ENCODE measurements at regions of chr12 and their contacts with region 1.

Region 1: DNA sequence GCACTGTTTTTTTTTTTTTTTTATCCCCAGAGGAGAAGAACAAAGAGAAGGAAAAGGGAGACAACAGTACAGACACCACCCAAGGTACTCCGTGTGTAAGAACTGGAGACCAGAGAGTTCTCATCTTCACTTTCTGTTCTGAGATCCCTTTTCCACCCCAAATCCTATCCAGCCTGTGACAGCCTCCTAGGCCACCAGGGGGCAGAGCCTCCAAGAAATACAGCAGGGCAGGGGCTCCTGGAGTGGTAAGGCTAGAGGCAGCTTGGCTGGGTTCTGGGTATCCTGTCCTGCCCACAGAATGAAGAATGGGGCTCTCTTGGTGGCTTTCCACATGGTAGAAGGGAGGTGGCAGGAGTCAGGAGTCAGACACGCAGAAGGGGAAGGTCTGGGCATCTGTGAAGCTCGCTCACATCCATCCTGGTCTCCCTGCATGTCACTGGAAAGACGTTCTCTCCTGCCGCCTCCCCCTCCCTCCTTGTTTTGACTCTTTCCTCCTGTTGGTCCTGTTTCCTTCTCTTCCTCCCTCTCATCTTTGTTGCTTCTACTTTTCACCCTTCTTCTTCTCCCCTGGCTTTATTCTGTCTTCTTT is 12.0 kb downstream of the CLSTN3 start:
- DNase-seq: peak; percentile 20 to 68 (median 57)
- ATAC-seq: peak; percentile 90
- H3K4me3 ChIP-seq: no peak overlapping the region
- H3K4me3 Mint-ChIP-seq: no peak overlapping the region
- H3K27ac ChIP-seq: no peak overlapping the region
- H3K27ac Mint-ChIP-seq: no peak overlapping the region
- H3K4me1 ChIP-seq: no peaks in the 10 kb centered on the region
- H3K4me1 Mint-ChIP-seq: no peaks in the 10 kb centered on the region
- H3K27me3 ChIP-seq: no peaks in the 10 kb centered on the region
- H3K27me3 Mint-ChIP-seq: no peaks in the 10 kb centered on the region
- CTCF ChIP-seq: no peak

Region 2: DNA sequence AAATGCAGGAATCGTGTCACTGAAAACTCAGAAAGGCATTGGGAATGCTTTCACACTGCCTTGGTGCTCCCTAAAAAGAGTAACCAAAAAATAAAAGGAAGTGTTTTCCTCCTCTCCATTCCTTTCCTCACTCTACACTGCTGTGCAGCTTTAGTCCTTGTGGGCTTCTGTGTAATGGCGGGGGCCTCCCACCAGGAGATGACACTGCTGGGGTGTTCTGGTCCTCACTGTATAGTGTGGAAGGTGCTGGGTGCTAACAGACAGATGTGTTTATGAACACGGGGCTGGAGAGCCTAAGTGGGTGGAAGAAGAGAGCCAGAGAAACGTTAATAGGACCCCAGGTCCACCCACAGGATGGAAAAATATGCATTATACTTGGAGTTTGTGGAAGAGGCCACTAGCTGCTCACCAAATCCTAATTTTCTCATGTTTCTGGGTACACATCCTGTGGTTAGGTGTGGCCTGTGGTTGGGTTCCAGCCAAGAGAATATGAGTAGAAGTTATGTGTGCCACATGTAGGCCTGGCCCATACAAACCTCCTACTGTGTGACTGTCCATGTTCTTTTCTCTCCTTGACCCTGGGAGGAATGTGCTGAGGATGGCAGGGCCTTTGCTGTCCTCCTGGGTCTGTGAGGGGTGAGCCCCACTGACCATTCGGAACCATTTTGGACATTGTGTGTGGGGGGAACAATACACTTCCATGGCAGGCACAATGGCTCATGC is 95.6 kb before region 1 on chr12:
- CTCF ChIA-PET with region 1: no interaction called
- POLR2A ChIA-PET with region 1: no interaction called
- intact Hi-C with region 1: no loop called
- DNase-seq: no peak
- ATAC-seq: no peak
- H3K4me3 ChIP-seq: no peak overlapping the region
- H3K4me3 Mint-ChIP-seq: no peak overlapping the region
- H3K27ac ChIP-seq: no peak overlapping the region
- H3K27ac Mint-ChIP-seq: no peak overlapping the region
- H3K4me1 ChIP-seq: no peaks in the 10 kb centered on the region
- H3K4me1 Mint-ChIP-seq: peaks cover 8% of the 10 kb centered on the region
- H3K27me3 ChIP-seq: no peaks in the 10 kb centered on the region
- H3K27me3 Mint-ChIP-seq: no peaks in the 10 kb centered on the region
- CTCF ChIP-seq: no peak

Region 3: DNA sequence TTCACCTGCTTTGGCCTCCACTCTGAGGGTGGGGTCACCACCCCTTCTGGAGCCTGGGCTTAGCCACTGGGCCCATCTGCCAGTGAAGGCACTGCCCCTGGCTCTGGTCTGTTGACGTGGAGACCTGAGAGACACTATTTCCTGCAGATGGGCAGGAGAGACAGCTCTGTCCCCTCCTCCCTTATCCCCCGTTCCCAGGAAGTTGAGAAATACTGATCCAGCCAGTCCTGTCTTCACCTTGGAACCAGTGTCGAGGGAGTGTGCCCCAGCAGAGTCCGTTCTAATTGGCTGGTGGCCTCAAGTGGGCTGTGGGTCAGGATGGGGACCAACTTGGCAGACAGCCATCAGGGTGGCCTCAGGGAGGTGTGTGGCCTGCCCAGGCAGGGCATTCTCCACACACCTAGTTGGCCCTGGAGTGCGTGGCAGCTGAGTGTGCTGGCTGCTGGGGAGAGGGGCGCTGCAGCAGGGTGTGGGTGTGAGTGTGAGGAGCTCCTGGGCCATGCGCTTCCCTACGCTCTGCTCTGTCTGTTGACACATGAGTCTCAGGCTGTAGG is 13.4 kb after region 1 on chr12:
- CTCF ChIA-PET with region 1: interaction called, 38 read pairs
- POLR2A ChIA-PET with region 1: no interaction called
- intact Hi-C with region 1: no loop called
- DNase-seq: no peak
- ATAC-seq: no peak
- H3K4me3 ChIP-seq: no peak overlapping the region
- H3K4me3 Mint-ChIP-seq: no peak overlapping the region
- H3K27ac ChIP-seq: no peak overlapping the region
- H3K27ac Mint-ChIP-seq: no peak overlapping the region
- H3K4me1 ChIP-seq: no peaks in the 10 kb centered on the region
- H3K4me1 Mint-ChIP-seq: no peaks in the 10 kb centered on the region
- H3K27me3 ChIP-seq: no peaks in the 10 kb centered on the region
- H3K27me3 Mint-ChIP-seq: no peaks in the 10 kb centered on the region
- CTCF ChIP-seq: no peak

Region 4: DNA sequence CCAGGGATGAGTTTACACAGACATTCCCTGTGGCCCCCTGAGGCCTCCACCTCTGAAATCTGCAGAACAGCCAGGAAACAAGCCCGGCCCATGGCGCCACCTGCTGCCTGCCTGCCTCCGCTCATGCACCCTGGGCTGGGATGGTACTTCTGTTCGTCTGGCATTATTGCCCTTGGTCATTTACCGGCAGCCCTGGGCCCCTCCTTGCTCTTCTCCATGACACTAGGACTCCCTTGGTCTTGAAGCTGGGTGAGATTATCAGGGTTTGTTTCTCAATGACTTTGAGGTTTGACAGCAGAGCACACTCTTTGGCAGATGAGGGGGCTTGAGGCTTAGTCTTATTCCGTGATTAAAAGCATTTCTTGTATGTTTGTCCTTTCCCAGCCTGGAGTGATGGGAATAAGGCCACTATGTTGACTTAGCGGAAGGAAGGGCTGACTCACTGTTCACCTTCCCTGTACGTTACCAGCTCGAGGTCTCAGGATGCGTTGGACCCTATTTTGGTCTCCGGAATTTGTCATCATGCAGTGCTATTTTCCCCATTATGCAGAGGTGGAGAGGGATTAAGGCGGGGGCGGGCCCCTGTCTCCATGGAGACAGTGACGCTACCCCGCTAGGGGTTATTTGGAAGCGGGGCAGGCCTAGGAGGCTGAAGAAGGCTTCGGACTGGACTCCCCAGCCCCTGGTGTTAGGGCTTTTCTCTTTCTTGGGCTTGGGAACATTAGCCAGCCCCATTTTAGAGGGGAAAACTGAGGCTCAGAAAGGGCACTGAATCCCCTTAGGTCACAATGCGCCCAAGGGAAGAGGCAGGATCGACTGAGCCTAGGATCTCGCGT is 46.6 kb after region 1 on chr12:
- CTCF ChIA-PET with region 1: interaction called, 9 read pairs
- POLR2A ChIA-PET with region 1: no interaction called
- intact Hi-C with region 1: loop called (anchors 1 kb)
- DNase-seq: peak; percentile 36 to 76 (median 63)
- ATAC-seq: peak; percentile 32
- H3K4me3 ChIP-seq: peak overlapping the region; percentile 85 to 86
- H3K4me3 Mint-ChIP-seq: peak overlapping the region; percentile 95
- H3K27ac ChIP-seq: peak overlapping the region; percentile 66 to 90
- H3K27ac Mint-ChIP-seq: peak overlapping the region; percentile 97
- H3K4me1 ChIP-seq: peaks cover 26% of the 10 kb centered on the region
- H3K4me1 Mint-ChIP-seq: peaks cover 44% of the 10 kb centered on the region
- H3K27me3 ChIP-seq: no peaks in the 10 kb centered on the region
- H3K27me3 Mint-ChIP-seq: no peaks in the 10 kb centered on the region
- CTCF ChIP-seq: peak; percentile 63

Region 5: DNA sequence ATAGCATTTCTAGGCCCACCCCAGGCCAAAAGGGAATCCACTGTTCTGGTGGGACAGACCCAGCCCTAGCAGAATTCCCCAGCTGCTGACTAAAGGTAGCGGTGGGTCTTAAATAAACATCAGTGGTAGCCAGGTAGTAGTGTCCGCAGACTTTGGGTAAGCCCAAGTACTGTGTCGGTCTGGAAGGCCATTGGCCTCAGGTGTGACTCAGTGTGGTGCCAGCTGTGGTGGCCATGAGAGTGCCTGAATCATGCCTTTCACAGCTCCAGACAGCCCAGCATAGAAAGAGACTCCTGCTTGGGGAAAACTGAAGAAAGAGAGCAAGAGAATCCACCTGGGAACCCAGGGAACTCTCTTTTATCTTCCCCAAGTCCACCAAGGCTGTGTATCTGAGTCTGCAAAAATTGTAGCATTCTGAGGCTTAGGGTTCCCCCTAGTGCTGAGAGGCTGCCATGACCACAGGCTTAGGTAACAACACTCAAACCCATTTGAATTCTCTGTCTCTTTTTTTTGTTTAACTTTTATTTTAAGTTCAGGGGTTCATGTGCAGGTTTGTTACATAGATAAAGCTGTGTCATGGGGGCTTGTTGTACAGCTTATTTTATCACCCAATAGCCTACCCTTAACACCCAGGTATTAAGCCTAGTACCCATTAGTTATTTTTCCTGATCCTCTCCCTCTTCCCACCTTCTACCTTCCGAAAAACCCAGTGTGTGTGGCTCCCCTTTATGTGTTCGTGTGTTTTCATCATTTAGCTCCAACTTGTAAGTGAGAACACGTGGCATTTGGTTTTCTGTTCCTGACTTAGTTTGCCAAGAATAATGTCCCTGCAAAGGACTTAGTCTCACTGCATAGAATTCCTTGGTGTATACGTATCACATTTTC is 318.5 kb after region 1 on chr12:
- CTCF ChIA-PET with region 1: no interaction called
- POLR2A ChIA-PET with region 1: no interaction called
- intact Hi-C with region 1: loop called (anchors 2 kb)
- DNase-seq: peak; percentile 13 to 73 (median 58)
- ATAC-seq: peak; percentile 57
- H3K4me3 ChIP-seq: no peak overlapping the region
- H3K4me3 Mint-ChIP-seq: no peak overlapping the region
- H3K27ac ChIP-seq: no peak overlapping the region
- H3K27ac Mint-ChIP-seq: no peak overlapping the region
- H3K4me1 ChIP-seq: no peaks in the 10 kb centered on the region
- H3K4me1 Mint-ChIP-seq: no peaks in the 10 kb centered on the region
- H3K27me3 ChIP-seq: no peaks in the 10 kb centered on the region
- H3K27me3 Mint-ChIP-seq: peaks cover 7% of the 10 kb centered on the region
- CTCF ChIP-seq: peak; percentile 41

Region 6: GRCh38 chr12:7948589-7949260 is 806.6 kb after region 1 on chr12:
- CTCF ChIA-PET with region 1: no interaction called
- POLR2A ChIA-PET with region 1: no interaction called
- intact Hi-C with region 1: no loop called
- DNase-seq: no peak
- ATAC-seq: no peak
- H3K4me3 ChIP-seq: no peak overlapping the region
- H3K4me3 Mint-ChIP-seq: no peak overlapping the region
- H3K27ac ChIP-seq: no peak overlapping the region
- H3K27ac Mint-ChIP-seq: no peak overlapping the region
- H3K4me1 ChIP-seq: no peaks in the 10 kb centered on the region
- H3K4me1 Mint-ChIP-seq: peaks cover 4% of the 10 kb centered on the region
- H3K27me3 ChIP-seq: no peaks in the 10 kb centered on the region
- H3K27me3 Mint-ChIP-seq: no peaks in the 10 kb centered on the region
- CTCF ChIP-seq: no peak